ENCODE measurements at regions of chr21 and their contacts with region 1.

Region 1: DNA sequence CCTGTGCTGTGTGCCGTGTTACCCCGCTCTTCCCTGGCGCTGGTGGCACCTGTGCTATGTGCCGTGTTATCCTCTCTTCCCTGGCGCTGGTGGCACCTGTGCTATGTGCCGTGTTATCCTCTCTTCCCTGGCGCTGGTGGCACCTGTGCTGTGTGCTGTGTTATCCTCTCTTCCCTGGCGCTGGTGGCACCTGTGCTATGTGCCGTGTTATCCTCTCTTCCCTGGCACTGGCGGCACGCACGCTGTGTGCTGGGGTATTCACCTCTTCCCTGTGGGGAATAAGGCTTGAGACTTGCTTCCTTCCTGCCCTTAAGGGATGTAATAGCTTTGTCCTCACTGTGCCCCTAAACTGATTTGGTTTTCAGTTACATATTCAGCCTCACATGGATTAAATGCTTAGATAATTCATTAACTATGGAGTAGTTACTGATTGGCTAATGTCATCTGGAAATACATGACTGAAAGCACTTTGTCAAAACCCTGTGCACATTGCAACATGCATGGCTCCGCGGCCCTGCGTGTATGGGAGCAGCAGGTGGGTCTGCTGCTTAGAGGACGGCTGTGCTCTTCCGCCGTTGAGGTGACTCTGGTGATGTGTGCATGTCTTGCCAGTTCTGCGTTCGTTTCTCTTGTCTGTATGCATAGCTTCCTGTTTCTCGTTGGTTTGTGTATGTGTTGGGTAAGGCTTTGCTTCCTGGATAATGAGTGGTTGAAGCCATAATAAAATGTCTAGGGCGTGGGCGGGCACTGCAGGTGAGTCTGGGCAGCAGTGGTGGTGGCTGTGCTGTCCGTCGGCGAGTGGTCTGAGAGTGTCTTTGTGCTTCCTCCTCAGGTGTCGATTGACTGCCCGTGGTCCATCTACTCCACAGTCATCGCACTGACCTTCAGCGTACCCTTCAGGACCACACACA is 17.9 kb upstream of the PWP2 start:
- DNase-seq: peak in 8 of 9 experiments; percentile 32 to 88 (median 64)
- ATAC-seq: peak; percentile 88
- H3K4me3 ChIP-seq: peak overlapping the region; percentile 19 to 27
- H3K4me3 Mint-ChIP-seq: peak overlapping the region; percentile 77
- H3K27ac ChIP-seq: peak overlapping the region; percentile 65 to 78
- H3K27ac Mint-ChIP-seq: peak overlapping the region; percentile 95
- H3K4me1 ChIP-seq: peaks cover 72% of the 10 kb centered on the region
- H3K4me1 Mint-ChIP-seq: peaks cover 73% of the 10 kb centered on the region
- H3K27me3 ChIP-seq: no peaks in the 10 kb centered on the region
- H3K27me3 Mint-ChIP-seq: no peaks in the 10 kb centered on the region
- CTCF ChIP-seq: no peak

Region 2: GRCh38 chr21:43703035-43703880 is 386.0 kb before region 1 on chr21:
- CTCF ChIA-PET with region 1: no interaction called
- POLR2A ChIA-PET with region 1: no interaction called
- intact Hi-C with region 1: no loop called
- DNase-seq: peak in 6 of 9 experiments; percentile 11 to 67 (median 51)
- ATAC-seq: peak; percentile 66
- H3K4me3 ChIP-seq: peak overlapping the region in 1 of 2 experiments; percentile 6
- H3K4me3 Mint-ChIP-seq: peak overlapping the region; percentile 73
- H3K27ac ChIP-seq: no peak overlapping the region
- H3K27ac Mint-ChIP-seq: no peak overlapping the region
- H3K4me1 ChIP-seq: no peaks in the 10 kb centered on the region
- H3K4me1 Mint-ChIP-seq: peaks cover 6% of the 10 kb centered on the region
- H3K27me3 ChIP-seq: no peaks in the 10 kb centered on the region
- H3K27me3 Mint-ChIP-seq: no peaks in the 10 kb centered on the region
- CTCF ChIP-seq: no peak

Region 3: GRCh38 chr21:43984905-43985689 is 104.2 kb before region 1 on chr21:
- CTCF ChIA-PET with region 1: no interaction called
- POLR2A ChIA-PET with region 1: no interaction called
- intact Hi-C with region 1: no loop called
- DNase-seq: peak in 1 of 9 experiments; percentile 22
- ATAC-seq: no peak
- H3K4me3 ChIP-seq: no peak overlapping the region
- H3K4me3 Mint-ChIP-seq: no peak overlapping the region
- H3K27ac ChIP-seq: no peak overlapping the region
- H3K27ac Mint-ChIP-seq: peak overlapping the region; percentile 66
- H3K4me1 ChIP-seq: peaks cover 19% of the 10 kb centered on the region
- H3K4me1 Mint-ChIP-seq: peaks cover 19% of the 10 kb centered on the region
- H3K27me3 ChIP-seq: no peaks in the 10 kb centered on the region
- H3K27me3 Mint-ChIP-seq: no peaks in the 10 kb centered on the region
- CTCF ChIP-seq: no peak

Region 4: DNA sequence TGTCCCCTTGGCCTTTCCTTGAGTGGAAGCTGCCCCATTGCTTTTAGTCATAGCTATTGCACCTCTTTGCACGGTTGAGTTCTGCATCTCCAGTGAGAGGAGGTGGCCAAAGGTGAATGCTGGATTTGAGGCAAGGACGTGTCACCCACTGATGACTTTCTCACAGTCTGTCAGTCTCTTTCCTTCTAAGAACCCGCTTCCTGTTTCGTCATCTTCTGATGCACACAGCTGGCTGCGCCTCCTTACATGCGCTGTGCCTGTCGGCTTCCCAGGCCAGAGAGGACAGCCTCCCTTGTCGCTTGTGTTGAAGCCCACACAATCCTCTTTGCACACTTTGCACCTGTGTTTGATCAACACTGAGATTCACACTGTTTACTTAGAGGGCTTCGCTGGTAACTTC is 23.8 kb before region 1 on chr21:
- CTCF ChIA-PET with region 1: interaction called, 7 read pairs
- POLR2A ChIA-PET with region 1: interaction called, 22 read pairs
- intact Hi-C with region 1: loop called in 1 of 2 experiments (anchors 1 kb)
- DNase-seq: peak; percentile 57 to 98 (median 79)
- ATAC-seq: peak; percentile 88
- H3K4me3 ChIP-seq: peak overlapping the region in 1 of 2 experiments; percentile 5
- H3K4me3 Mint-ChIP-seq: peak overlapping the region; percentile 73
- H3K27ac ChIP-seq: peak overlapping the region; percentile 64 to 94
- H3K27ac Mint-ChIP-seq: peak overlapping the region; percentile 96
- H3K4me1 ChIP-seq: peaks cover 24% of the 10 kb centered on the region
- H3K4me1 Mint-ChIP-seq: peaks cover 49% of the 10 kb centered on the region
- H3K27me3 ChIP-seq: no peaks in the 10 kb centered on the region
- H3K27me3 Mint-ChIP-seq: no peaks in the 10 kb centered on the region
- CTCF ChIP-seq: no peak

Region 5: GRCh38 chr21:44074311-44074958 is 14.8 kb before region 1 on chr21:
- CTCF ChIA-PET with region 1: interaction called, 47 read pairs
- POLR2A ChIA-PET with region 1: interaction called, 25 read pairs
- intact Hi-C with region 1: no loop called
- DNase-seq: peak in 7 of 9 experiments; percentile 27 to 79 (median 62)
- ATAC-seq: peak; percentile 90
- H3K4me3 ChIP-seq: no peak overlapping the region
- H3K4me3 Mint-ChIP-seq: peak overlapping the region; percentile 9
- H3K27ac ChIP-seq: peak overlapping the region in 1 of 2 experiments; percentile 12
- H3K27ac Mint-ChIP-seq: peak overlapping the region; percentile 77
- H3K4me1 ChIP-seq: peaks cover 11% of the 10 kb centered on the region
- H3K4me1 Mint-ChIP-seq: peaks cover 41% of the 10 kb centered on the region
- H3K27me3 ChIP-seq: no peaks in the 10 kb centered on the region
- H3K27me3 Mint-ChIP-seq: no peaks in the 10 kb centered on the region
- CTCF ChIP-seq: no peak